AG04450 (cell line): ENCODE measurements at regions of chr6 and their contacts with region 1.

Region 1: DNA sequence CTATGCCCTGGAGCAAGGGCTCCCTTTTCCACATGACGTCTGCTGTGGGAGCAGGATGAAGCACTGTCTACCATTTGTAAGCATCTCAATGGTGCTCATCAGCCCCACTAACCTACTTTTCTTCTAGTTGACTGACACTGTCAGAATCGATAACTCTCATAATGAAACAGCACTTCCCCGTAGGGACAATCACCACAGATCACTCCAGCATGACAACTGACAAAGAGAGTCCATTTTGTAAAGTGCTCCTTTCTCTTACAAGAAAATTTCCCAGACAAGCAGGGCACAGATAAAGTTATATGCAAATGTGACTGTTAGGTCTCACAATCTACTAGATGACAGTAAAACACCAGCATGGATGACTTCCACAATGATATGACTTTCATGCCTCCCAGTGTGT is 46.4 kb downstream of the HEBP2 start:
- DNase-seq: no peak
- H3K4me3 ChIP-seq: no peak overlapping the region
- H3K27ac ChIP-seq: no peak overlapping the region
- H3K27me3 ChIP-seq: no peaks in the 10 kb centered on the region
- CTCF ChIP-seq: no peak

Region 2: GRCh38 chr6:138196122-138196738 is 254.2 kb before region 1 on chr6:
- CTCF ChIA-PET with region 1: no interaction called
- POLR2A ChIA-PET with region 1: no interaction called
- DNase-seq: no peak
- H3K4me3 ChIP-seq: no peak overlapping the region
- H3K27ac ChIP-seq: no peak overlapping the region
- H3K27me3 ChIP-seq: no peaks in the 10 kb centered on the region
- CTCF ChIP-seq: no peak

Region 3: GRCh38 chr6:138403801-138404661 is 46.4 kb before region 1 on chr6 and contains the start of gene HEBP2:
- CTCF ChIA-PET with region 1: no interaction called
- POLR2A ChIA-PET with region 1: no interaction called
- DNase-seq: no peak
- H3K4me3 ChIP-seq: peak within 1 kb of the TSS; percentile 74
- H3K27ac ChIP-seq: no peak within 1 kb of the TSS
- H3K27me3 ChIP-seq: peaks cover 2% of the 10 kb centered on the region
- CTCF ChIP-seq: peak; percentile 41
- polyA plus RNA-seq, gene HEBP2: 10.1 and 16.8 TPM in 2 replicates

Region 4: DNA sequence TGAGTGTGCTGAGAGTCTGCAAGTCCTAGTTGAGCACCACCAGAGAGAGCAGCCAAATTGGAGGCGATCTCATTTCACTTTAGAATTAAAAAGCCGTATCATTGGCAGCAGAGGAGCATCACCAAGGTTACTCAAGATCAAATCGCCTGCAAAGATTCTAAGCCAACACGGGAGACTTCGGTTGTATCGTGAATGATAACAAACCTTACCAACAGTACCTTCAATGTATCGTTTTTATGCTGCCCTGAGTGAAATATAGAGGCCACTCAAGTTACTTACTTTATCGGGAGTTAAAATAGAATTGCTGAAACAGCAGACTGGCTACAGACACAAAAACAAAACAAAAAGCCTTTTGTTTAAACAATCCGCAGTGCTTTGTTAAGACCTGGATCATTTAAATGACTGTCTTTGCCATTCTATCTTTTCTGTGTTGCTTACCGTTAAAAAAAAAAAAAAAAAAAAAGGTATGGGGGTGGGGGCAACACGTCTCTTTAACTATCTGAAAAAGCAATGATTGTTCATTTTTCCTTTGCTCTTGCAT is 34.6 kb after region 1 on chr6:
- CTCF ChIA-PET with region 1: no interaction called
- POLR2A ChIA-PET with region 1: no interaction called
- DNase-seq: no peak
- H3K4me3 ChIP-seq: no peak overlapping the region
- H3K27ac ChIP-seq: no peak overlapping the region
- H3K27me3 ChIP-seq: no peaks in the 10 kb centered on the region
- CTCF ChIP-seq: no peak

Region 5: DNA sequence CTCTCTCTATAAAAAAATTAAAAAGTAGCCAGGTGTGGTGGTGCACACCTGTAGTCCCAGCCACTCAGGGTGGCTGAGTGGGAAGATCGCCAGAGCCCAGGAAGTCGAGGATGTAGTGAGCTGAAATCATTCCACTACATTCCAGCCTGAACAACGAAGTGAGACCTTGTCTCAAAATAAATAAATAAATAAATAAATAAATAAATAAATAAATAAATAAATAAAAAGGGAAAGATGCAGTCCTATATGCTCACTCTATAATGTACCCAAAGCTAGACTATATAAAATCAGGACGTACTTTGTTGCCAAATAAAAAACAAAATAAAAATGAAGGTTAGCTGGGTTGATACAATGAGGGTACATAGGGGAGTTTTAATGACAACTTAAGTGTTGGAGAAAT is 74.9 kb after region 1 on chr6:
- CTCF ChIA-PET with region 1: interaction called, 12 read pairs
- POLR2A ChIA-PET with region 1: no interaction called
- DNase-seq: no peak
- H3K4me3 ChIP-seq: no peak overlapping the region
- H3K27ac ChIP-seq: no peak overlapping the region
- H3K27me3 ChIP-seq: no peaks in the 10 kb centered on the region
- CTCF ChIP-seq: no peak

Region 6: DNA sequence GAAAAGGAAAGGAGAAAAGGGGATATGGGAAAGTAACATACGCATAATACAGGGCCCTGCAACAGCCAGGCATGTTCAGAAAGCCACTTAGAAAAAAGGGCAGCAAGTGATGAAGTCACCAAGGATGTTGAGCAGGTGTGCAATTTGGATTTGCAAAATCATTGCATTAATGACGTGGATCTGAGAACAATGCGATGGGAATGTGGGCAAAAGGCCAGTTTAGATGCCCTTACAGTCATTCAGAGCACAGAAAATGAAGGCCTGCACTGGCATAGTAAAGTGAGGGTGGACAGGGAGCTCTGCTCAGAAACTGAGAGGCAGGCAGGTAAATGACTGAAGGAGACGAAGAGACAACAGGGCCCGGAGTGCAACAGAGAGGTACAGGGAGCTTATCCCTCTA is 172.5 kb after region 1 on chr6:
- CTCF ChIA-PET with region 1: no interaction called
- POLR2A ChIA-PET with region 1: no interaction called
- DNase-seq: no peak
- H3K4me3 ChIP-seq: no peak overlapping the region
- H3K27ac ChIP-seq: no peak overlapping the region
- H3K27me3 ChIP-seq: no peaks in the 10 kb centered on the region
- CTCF ChIP-seq: no peak